ENCODE measurements at regions of chr17 and their contacts with region 1.

Region 1: DNA sequence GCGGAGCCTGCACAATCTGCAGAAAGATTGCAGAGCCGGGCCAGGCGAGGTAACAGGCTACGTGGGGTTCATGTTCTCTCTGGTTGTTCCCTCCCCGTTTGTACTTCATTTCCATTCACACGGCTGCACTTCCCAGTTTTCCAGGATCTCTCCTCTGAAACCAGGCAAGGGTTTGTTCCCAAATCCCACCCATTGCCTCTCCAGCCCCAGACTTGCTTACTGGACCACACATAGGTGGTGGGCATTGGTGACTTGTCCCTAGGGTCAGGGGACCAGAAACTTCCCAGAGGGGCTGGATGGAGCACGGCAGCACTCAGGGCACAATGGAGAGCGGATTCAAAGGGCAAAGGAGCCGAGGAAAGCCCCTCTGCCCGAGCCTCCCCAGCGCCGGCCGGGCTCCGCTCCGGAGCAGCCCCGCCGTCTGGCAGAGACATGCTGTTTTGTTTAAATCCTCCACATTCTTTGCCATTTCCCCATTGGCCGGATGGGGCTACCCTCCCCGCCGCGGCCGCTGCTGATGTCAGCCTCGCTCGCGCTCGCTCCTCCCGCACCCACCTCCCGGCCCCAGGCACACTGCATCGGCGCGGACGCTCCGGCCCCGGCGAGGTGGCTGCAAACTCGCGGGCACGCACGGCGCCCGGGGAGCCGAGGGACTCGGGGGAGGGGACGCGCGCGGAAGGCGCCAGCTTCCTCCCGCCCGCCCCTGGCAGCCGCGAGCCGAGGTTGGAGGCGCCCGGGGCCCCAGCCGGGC is at the start of gene PITPNC1:
- DNase-seq: peak; percentile 81 to 91 (median 87)
- H3K4me3 ChIP-seq: peak within 1 kb of the TSS; percentile 93
- H3K4me3 Mint-ChIP-seq: peak within 1 kb of the TSS; percentile 88 to 99 (median 96)
- H3K27ac ChIP-seq: peak within 1 kb of the TSS; percentile 82
- H3K27ac Mint-ChIP-seq: peak within 1 kb of the TSS; percentile 87 to 98 (median 92)
- H3K4me1 ChIP-seq: peaks cover 42% of the 10 kb centered on the region
- H3K4me1 Mint-ChIP-seq: peaks cover 40 to 49% (median 42%) of the 10 kb centered on the region in 3 donors
- H3K27me3 ChIP-seq: no peaks in the 10 kb centered on the region
- H3K27me3 Mint-ChIP-seq: peaks cover 0 to 1% of the 10 kb centered on the region in 2 donors
- total RNA-seq, gene PITPNC1: 43.1 to 45.1 TPM

Region 2: GRCh38 chr17:67336859-67337258 is 40.1 kb before region 1 on chr17:
- CTCF ChIA-PET with region 1: no interaction called
- POLR2A ChIA-PET with region 1: no interaction called
- DNase-seq: no peak
- H3K4me3 ChIP-seq: no peak overlapping the region
- H3K4me3 Mint-ChIP-seq: no peak overlapping the region
- H3K27ac ChIP-seq: no peak overlapping the region
- H3K27ac Mint-ChIP-seq: peak overlapping the region in 1 of 8 donors; percentile 59
- H3K4me1 ChIP-seq: no peaks in the 10 kb centered on the region
- H3K4me1 Mint-ChIP-seq: no peaks in the 10 kb centered on the region
- H3K27me3 ChIP-seq: no peaks in the 10 kb centered on the region
- H3K27me3 Mint-ChIP-seq: peaks cover 0 to 2% of the 10 kb centered on the region in 2 donors

Region 3: GRCh38 chr17:67390646-67391384 is 13.9 kb after region 1 on chr17:
- CTCF ChIA-PET with region 1: interaction called, 13 read pairs
- POLR2A ChIA-PET with region 1: interaction called, 4 read pairs
- DNase-seq: peak; percentile 42 to 82 (median 55)
- H3K4me3 ChIP-seq: peak overlapping the region; percentile 3
- H3K4me3 Mint-ChIP-seq: peak overlapping the region; percentile 75 to 96 (median 84)
- H3K27ac ChIP-seq: peak overlapping the region; percentile 1
- H3K27ac Mint-ChIP-seq: peak overlapping the region; percentile 89 to 99 (median 94)
- H3K4me1 ChIP-seq: peaks cover 69% of the 10 kb centered on the region
- H3K4me1 Mint-ChIP-seq: peaks cover 69 to 94% (median 88%) of the 10 kb centered on the region in 3 donors
- H3K27me3 ChIP-seq: no peaks in the 10 kb centered on the region
- H3K27me3 Mint-ChIP-seq: no peaks in the 10 kb centered on the region

Region 4: DNA sequence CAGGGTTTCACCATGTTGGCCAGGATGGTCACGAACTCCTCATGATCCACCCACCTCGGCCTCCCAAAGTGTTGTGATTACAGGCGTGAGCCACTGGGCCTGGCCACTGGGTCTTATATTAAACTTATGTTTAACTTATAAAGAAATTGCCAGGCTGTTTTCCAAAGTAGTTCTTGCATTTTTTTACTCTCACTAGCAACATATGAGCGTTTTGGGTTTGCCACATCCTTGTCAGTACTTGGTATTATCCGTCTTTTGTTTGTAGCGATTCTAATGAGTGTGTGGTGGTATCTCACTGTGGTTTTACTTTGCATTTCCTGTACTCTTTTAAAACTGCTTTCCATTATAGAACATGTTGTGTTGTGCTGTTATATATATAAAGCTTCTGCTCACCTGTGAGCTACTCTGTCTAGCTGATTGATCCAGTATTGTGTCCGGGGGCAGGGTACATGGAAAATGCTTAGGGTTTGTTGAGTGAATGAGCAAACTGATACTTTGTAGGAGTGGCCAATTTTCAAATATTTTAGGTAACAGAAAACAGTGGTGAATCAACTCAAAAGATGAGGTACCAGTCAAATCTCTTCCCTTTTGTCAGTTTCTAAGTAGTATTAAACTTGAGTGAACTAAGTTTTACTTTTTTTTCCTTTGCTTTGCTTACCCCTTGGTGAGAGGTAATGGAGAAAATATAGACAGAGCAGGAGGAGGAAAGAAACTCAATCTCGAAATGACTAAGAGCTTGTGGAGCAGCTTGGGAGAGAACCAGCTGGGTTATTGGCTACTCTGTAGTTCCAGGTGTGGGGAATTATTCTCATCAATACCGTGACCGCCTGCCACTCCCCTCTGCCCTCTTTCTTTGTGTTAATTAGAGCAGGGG is 76.0 kb after region 1 on chr17:
- CTCF ChIA-PET with region 1: interaction called, 14 read pairs
- POLR2A ChIA-PET with region 1: interaction called, 9 read pairs
- DNase-seq: peak in 3 of 5 donors; percentile 52 to 78 (median 77)
- H3K4me3 ChIP-seq: peak overlapping the region; percentile 11
- H3K4me3 Mint-ChIP-seq: peak overlapping the region; percentile 61 to 83 (median 77)
- H3K27ac ChIP-seq: peak overlapping the region; percentile 20
- H3K27ac Mint-ChIP-seq: peak overlapping the region; percentile 88 to 99 (median 94)
- H3K4me1 ChIP-seq: peaks cover 90% of the 10 kb centered on the region
- H3K4me1 Mint-ChIP-seq: peaks cover 88 to 100% (median 97%) of the 10 kb centered on the region in 3 donors
- H3K27me3 ChIP-seq: no peaks in the 10 kb centered on the region
- H3K27me3 Mint-ChIP-seq: no peaks in the 10 kb centered on the region

Region 5: DNA sequence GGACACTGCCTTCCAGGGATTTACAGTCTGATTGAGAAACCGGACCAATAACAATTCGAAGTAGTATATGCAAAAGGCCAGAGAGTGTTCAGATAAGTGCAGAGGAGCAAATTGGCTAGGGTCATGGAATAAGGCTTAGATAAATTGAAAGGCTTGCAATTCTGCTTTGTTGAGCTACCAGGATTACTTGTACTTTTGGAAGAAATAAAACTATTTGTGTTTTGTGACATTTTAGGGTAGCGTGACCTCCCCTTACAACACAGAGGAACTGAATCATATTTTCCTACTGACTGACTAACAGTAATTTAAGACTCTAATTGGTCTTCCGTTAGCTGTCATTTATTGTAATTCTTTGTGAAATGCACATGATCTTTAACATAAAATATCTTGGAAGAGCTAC is 104.9 kb after region 1 on chr17:
- CTCF ChIA-PET with region 1: interaction called, 269 read pairs
- POLR2A ChIA-PET with region 1: interaction called, 50 read pairs
- DNase-seq: no peak
- H3K4me3 ChIP-seq: no peak overlapping the region
- H3K4me3 Mint-ChIP-seq: peak overlapping the region in 3 of 7 donors; percentile 20 to 52 (median 25)
- H3K27ac ChIP-seq: no peak overlapping the region
- H3K27ac Mint-ChIP-seq: peak overlapping the region in 7 of 8 donors; percentile 19 to 80 (median 59)
- H3K4me1 ChIP-seq: peaks cover 53% of the 10 kb centered on the region
- H3K4me1 Mint-ChIP-seq: peaks cover 75 to 90% (median 86%) of the 10 kb centered on the region in 3 donors
- H3K27me3 ChIP-seq: no peaks in the 10 kb centered on the region
- H3K27me3 Mint-ChIP-seq: no peaks in the 10 kb centered on the region

Region 6: DNA sequence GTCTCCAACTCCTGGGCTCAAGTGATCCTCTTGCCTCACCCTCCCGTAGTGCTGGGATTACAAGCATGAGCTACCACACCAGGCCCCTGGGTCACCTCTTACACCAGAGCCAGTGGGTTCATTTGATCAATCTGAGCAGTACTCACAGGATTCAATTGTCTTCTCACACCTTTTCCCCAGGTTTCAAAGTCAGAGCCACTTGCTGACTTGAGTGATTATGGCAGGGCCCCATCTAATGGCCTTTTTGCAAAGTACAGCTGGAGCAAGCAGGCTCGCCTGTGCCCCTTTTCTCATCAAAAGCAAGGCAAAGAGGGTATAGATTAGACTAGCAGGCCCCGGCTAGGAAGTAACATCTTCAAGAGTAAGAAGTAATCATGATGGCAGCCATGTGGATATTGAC is 226.0 kb after region 1 on chr17:
- CTCF ChIA-PET with region 1: interaction called, 16 read pairs
- POLR2A ChIA-PET with region 1: interaction called, 3 read pairs
- DNase-seq: peak; percentile 4 to 56 (median 32)
- H3K4me3 ChIP-seq: no peak overlapping the region
- H3K4me3 Mint-ChIP-seq: no peak overlapping the region
- H3K27ac ChIP-seq: no peak overlapping the region
- H3K27ac Mint-ChIP-seq: peak overlapping the region in 7 of 8 donors; percentile 8 to 82 (median 72)
- H3K4me1 ChIP-seq: no peaks in the 10 kb centered on the region
- H3K4me1 Mint-ChIP-seq: peaks cover 22 to 51% (median 37%) of the 10 kb centered on the region in 3 donors
- H3K27me3 ChIP-seq: no peaks in the 10 kb centered on the region
- H3K27me3 Mint-ChIP-seq: peaks cover 0 to 2% of the 10 kb centered on the region in 2 donors

Measured in CD8-positive, alpha-beta memory T cell (primary cell).